Endothelial cell of umbilical vein (primary cell): ENCODE measurements at regions of chr11 and their contacts with region 1.

Region 1: DNA sequence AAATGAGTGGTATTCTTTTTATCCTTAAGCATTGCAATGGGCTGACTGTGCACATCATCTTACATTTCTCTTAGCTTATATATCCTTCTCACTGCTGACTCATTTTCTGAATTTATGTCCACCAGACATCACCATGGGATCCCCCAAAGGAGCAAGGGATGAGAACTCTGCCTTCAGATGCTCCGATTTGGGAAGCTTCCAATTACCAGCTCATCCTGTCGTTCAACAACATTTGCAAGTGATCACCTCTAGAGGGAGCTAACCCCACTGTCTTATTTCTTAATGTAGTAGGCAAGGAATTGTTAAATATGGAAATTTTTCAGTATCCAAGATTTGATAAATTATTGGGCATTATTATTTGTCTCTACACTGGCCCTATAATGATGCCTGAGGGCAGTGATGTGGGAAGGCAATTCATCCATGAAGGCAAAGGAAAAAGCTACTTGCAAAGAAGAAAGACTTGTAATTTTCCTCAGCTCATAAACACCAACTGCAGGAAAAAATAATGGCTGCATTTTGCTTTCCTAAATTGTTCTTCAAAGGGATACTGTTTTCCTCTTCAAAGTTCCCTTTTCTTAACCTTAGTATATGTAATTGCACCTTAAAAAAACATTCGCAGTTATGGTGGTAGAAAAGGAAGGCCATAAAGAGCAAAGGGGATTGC is 102.4 kb upstream of the FSHB start:
- DNase-seq: peak; percentile 31
- H3K4me3 ChIP-seq: no peak overlapping the region
- H3K27ac ChIP-seq: no peak overlapping the region
- H3K4me1 ChIP-seq: no peaks in the 10 kb centered on the region
- H3K27me3 ChIP-seq: no peaks in the 10 kb centered on the region
- CTCF ChIP-seq: peak; percentile 52 to 56
- POLR2A ChIP-seq: no peak

Region 2: DNA sequence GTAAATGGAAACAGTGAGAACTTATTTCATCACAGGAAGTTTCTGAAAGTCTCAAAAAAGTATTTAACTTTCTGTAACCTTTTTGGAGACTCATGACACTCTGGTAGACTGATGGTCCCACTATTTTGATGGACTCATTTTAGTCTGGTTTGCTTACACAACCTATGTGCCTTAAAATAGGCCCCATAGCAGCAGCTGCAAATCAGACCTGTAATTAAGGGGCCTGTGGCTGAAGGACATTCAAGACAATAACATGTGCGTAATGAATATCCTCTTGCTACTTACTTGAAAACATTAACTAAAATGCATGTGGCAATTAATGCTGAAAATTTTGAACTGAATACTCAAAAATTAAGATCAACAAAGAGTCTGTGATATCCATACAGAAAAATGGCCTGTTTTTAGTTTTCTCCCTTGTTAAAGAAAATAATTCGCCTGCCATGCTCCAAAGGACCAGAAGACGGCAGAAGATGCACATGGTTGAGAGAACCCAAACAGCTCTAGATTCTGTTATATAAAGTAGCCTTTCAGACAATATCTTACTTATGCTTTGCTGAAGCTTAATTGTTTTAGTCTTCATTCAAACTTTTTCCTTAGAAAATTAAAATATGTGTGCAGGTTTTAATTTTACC is 680.0 kb before region 1 on chr11:
- CTCF ChIA-PET with region 1: interaction called, 27 read pairs
- POLR2A ChIA-PET with region 1: no interaction called
- dilution Hi-C with region 1: no loop called
- intact Hi-C with region 1: no loop called
- DNase-seq: peak; percentile 54
- H3K4me3 ChIP-seq: no peak overlapping the region
- H3K27ac ChIP-seq: no peak overlapping the region
- H3K4me1 ChIP-seq: peaks cover 24% of the 10 kb centered on the region
- H3K27me3 ChIP-seq: no peaks in the 10 kb centered on the region
- CTCF ChIP-seq: peak; percentile 28 to 56
- POLR2A ChIP-seq: no peak

Region 3: DNA sequence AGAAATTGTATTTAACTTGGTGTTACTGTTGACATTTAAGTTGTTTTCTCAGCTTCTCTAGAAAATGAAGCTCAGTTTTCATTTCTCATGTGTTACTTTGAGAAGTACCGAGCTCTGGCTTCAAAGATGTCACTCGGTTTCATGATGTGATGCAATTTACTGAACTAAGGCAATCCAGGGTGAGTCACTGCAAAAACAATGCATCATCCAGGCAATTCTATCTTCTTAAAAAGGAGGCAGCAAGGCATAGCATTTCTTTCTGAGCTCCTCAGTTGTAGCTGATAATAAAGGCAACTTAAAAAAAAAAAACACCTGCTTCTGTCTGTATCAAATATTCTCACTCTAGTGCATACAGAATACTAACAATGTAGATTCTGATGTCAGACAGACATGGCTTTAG is 20.5 kb before region 1 on chr11:
- CTCF ChIA-PET with region 1: interaction called, 10 read pairs
- POLR2A ChIA-PET with region 1: no interaction called
- dilution Hi-C with region 1: no loop called
- intact Hi-C with region 1: no loop called
- DNase-seq: no peak
- H3K4me3 ChIP-seq: no peak overlapping the region
- H3K27ac ChIP-seq: no peak overlapping the region
- H3K4me1 ChIP-seq: no peaks in the 10 kb centered on the region
- H3K27me3 ChIP-seq: no peaks in the 10 kb centered on the region
- CTCF ChIP-seq: no peak
- POLR2A ChIP-seq: no peak

Region 4: DNA sequence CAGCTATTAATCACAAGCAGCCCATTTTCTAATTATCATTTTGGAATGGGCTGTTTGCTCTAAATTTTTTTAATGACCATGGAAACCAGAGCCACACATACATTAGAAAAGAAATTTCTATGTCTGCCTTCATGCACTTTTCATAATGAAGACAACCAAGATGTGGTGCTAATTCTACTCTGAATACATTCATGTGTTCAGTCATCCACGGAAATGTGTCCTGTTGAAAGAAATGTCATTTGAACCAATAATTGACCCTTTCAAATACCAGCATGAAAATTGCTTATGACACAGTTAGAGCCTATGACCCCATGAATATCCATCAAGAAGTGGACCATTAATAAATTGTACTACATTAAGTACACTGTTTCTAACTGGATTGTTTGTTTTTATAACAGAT is 11.9 kb before region 1 on chr11:
- CTCF ChIA-PET with region 1: interaction called, 24 read pairs
- POLR2A ChIA-PET with region 1: no interaction called
- dilution Hi-C with region 1: no loop called
- intact Hi-C with region 1: no loop called
- DNase-seq: no peak
- H3K4me3 ChIP-seq: no peak overlapping the region
- H3K27ac ChIP-seq: no peak overlapping the region
- H3K4me1 ChIP-seq: no peaks in the 10 kb centered on the region
- H3K27me3 ChIP-seq: no peaks in the 10 kb centered on the region
- CTCF ChIP-seq: no peak
- POLR2A ChIP-seq: no peak

Region 5: DNA sequence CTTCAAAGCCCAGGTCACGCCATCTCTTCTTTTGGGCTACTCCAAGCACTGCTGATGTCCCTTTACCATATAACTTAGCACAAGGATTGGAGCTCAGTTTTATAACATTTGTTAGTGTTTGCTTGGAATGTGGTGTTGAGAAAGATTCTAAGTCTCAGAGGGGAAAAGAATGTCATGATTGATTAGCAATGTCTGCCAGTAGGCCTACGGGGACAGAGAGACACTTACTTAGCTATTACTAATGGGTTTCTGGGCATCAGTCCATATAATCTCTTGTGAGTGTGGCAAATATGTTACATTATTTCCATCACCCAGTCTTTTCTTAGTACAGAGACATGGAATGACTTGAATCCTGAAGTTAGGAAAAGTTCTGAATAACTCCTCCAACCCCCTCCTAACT is 27.0 kb after region 1 on chr11:
- CTCF ChIA-PET with region 1: interaction called, 11 read pairs
- POLR2A ChIA-PET with region 1: no interaction called
- dilution Hi-C with region 1: no loop called
- intact Hi-C with region 1: no loop called
- DNase-seq: no peak
- H3K4me3 ChIP-seq: no peak overlapping the region
- H3K27ac ChIP-seq: no peak overlapping the region
- H3K4me1 ChIP-seq: no peaks in the 10 kb centered on the region
- H3K27me3 ChIP-seq: no peaks in the 10 kb centered on the region
- CTCF ChIP-seq: no peak
- POLR2A ChIP-seq: no peak

Region 6: GRCh38 chr11:30196400-30197206 is 68.2 kb after region 1 on chr11:
- CTCF ChIA-PET with region 1: interaction called, 110 read pairs
- POLR2A ChIA-PET with region 1: no interaction called
- dilution Hi-C with region 1: no loop called
- intact Hi-C with region 1: no loop called
- DNase-seq: peak; percentile 54
- H3K4me3 ChIP-seq: no peak overlapping the region
- H3K27ac ChIP-seq: no peak overlapping the region
- H3K4me1 ChIP-seq: no peaks in the 10 kb centered on the region
- H3K27me3 ChIP-seq: no peaks in the 10 kb centered on the region
- CTCF ChIP-seq: peak; percentile 71 to 82
- POLR2A ChIP-seq: no peak

Region 7: DNA sequence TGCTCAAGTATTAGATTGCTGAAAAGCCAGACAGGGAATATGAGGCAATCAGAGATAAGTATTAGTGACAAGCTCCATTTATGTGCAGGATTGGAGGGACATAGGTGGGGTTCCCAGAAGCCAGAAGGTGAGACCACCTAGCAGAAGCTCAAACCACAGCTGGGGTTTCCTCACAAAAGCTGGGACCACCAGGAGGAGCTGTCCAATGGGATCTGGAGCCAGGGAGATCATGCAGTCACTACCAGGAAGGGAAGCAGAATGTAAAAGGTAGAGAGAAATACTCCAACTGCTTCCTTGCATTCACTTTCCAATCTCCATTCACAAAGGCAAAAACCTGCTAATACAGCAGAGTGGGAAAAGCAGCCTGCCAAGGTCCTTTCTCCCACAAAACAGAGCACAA is 97.2 kb after region 1 on chr11:
- CTCF ChIA-PET with region 1: no interaction called
- POLR2A ChIA-PET with region 1: no interaction called
- dilution Hi-C with region 1: no loop called
- intact Hi-C with region 1: no loop called
- DNase-seq: no peak
- H3K4me3 ChIP-seq: no peak overlapping the region
- H3K27ac ChIP-seq: no peak overlapping the region
- H3K4me1 ChIP-seq: no peaks in the 10 kb centered on the region
- H3K27me3 ChIP-seq: no peaks in the 10 kb centered on the region
- CTCF ChIP-seq: no peak
- POLR2A ChIP-seq: no peak

Region 8: DNA sequence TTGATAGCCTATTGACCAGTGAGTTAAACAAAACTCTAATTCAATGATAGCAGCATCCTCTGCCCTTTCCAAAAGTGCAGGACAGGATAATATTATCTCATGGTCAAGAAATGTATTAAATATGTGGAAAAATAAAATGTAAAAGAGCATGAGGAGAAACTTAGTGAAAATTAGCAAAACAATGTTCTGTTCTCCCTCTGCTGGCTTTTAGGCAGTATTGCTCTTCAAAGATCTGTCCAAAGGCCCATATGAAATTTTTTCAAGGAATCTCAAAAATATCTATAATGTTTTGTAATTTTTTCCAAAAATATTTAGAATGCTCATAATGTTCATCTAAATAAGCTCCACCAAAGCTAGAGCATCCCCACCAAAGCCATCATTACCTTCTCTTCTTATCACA is 186.2 kb after region 1 on chr11:
- CTCF ChIA-PET with region 1: interaction called, 23 read pairs
- POLR2A ChIA-PET with region 1: no interaction called
- dilution Hi-C with region 1: no loop called
- intact Hi-C with region 1: no loop called
- DNase-seq: no peak
- H3K4me3 ChIP-seq: no peak overlapping the region
- H3K27ac ChIP-seq: no peak overlapping the region
- H3K4me1 ChIP-seq: no peaks in the 10 kb centered on the region
- H3K27me3 ChIP-seq: peaks cover 8 to 28% of the 10 kb centered on the region in 2 experiments
- CTCF ChIP-seq: peak; percentile 9 to 37
- POLR2A ChIP-seq: no peak

Region 9: DNA sequence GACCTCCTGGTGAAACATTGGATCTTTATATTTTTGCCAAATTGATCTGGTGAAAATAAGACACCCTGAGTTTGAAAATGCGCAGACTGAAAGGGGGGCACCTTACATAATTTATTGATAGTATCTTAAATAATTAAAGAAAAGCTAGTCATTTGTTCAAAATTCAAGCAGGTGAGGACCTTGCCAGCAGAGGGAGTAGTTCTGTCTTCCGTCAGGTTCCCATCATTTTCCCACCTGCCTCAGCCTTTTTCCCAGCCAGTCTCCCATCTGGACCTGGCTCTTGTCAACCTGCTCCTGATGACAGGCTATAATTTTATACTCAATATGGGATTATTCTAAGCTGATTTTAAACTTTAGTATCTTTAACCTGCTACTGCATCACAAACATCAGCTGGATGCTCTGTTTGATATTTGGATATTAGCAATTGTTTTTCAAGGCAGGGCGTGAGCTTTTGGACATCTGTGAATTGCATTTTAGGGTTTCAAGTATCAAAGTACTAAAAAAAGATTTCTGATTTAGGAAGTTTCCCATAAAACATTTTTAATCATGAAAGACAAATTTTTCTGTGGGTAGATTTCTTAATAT is 1513.2 kb after region 1 on chr11:
- CTCF ChIA-PET with region 1: no interaction called
- POLR2A ChIA-PET with region 1: no interaction called
- dilution Hi-C with region 1: no loop called
- intact Hi-C with region 1: no loop called
- DNase-seq: peak; percentile 41
- H3K4me3 ChIP-seq: no peak overlapping the region
- H3K27ac ChIP-seq: no peak overlapping the region
- H3K4me1 ChIP-seq: peaks cover 7% of the 10 kb centered on the region
- H3K27me3 ChIP-seq: no peaks in the 10 kb centered on the region
- CTCF ChIP-seq: peak; percentile 56 to 59
- POLR2A ChIP-seq: no peak